Dendritic cell treated with granulocyte-macrophage colony-stimulating factor and Interleukin-4, amounts not matched to agents 40 ng/mL and 50 ng/mL, for 4 days (primary cell): ENCODE measurements at regions of chr1 and their contacts with region 1.

Region 1: GRCh38 chr1:205273551-205273982 is 45.8 kb downstream of the TMCC2 start:
- H3K4me3 Mint-ChIP-seq: no peak overlapping the region
- H3K27ac Mint-ChIP-seq: no peak overlapping the region
- H3K4me1 Mint-ChIP-seq: peaks cover 10% of the 10 kb centered on the region
- H3K27me3 Mint-ChIP-seq: peaks cover 8% of the 10 kb centered on the region

Region 2: DNA sequence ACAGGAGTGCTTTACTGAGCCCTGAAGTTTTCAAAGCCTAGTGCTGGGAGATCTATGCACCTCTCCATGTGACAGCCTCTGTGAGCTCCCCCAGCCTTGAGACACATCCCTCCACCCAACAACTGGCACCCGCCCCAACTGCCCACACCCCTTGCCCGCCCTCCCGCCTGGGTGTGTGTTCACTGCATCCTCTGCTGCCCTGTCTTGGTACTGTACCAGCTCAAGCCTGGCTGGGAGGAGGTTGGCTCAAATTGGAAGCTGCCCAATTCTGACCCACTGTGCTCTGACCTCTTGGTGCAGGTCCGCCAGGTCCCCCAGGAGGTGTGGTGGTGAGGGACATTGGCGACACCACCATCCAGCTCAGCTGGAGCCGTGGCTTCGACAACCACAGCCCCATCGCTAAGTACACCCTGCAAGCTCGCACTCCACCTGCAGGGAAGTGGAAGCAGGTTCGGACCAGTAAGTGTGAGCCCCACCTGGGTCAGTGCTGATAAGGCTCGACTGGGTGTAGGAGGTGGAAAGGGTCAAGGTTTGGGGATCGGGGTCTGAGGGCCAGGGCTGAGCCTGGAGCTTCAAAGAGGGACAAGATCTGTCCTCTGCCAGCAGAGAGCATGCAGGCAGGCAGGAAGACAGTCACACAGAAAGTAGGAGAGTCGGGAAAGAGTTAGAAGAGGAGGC is 207.3 kb before region 1 on chr1:
- intact Hi-C with region 1: no loop called
- H3K4me3 Mint-ChIP-seq: no peak overlapping the region
- H3K27ac Mint-ChIP-seq: no peak overlapping the region
- H3K4me1 Mint-ChIP-seq: no peaks in the 10 kb centered on the region
- H3K27me3 Mint-ChIP-seq: no peaks in the 10 kb centered on the region

Region 3: DNA sequence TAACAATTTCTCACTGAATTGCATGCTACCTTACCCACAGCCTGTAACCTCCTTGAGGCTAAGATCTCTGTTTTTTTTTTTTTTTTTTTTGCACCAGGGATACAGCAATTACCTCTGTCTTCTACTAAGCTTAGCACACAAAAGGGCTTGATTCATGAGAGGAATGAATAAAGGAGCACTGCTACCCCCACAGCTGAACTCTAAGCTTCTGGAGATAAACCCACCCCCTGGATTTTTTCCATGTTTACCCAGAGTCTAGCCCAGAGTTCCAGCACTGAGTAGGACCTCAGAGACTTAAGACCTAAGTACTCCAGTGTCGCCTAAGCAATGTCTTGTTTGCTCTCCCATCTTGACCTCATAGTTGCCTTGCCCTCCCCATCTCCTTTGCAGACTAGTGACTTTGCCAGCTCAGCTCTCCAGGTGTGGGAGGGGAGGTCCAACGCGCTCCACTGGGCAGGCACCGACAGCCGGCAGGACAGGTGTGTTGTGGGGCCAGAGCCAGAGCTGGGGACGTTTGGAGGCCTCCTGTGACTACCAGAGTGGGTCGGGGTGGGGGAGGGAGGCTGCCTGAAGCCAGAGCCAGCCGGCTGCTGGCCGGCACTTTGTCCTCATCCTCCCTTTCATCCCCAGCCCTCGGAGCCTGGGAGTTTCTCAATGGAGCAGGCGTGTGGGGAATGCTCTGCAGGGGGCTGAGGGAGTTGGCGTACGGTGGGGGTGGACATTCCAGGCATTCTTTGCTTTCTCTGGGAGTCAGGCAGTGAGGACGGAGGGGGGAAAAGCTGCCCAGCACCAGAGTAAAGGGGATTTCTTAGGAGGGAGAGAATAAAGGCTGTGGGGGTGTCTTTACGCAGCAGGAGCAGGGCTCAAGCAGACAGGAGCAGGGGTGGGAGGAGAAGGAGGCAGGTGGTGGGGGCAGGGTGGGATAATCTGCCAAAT is 27.6 kb after region 1 on chr1:
- intact Hi-C with region 1: loop called (anchors 2 kb)
- H3K4me3 Mint-ChIP-seq: no peak overlapping the region
- H3K27ac Mint-ChIP-seq: no peak overlapping the region
- H3K4me1 Mint-ChIP-seq: peaks cover 24% of the 10 kb centered on the region
- H3K27me3 Mint-ChIP-seq: peaks cover 4% of the 10 kb centered on the region

Region 4: GRCh38 chr1:205321164-205321958 is 47.8 kb after region 1 on chr1 and contains the start of gene NUAK2:
- intact Hi-C with region 1: loop called (anchors 1 kb)
- H3K4me3 Mint-ChIP-seq: peak within 1 kb of the TSS; percentile 90
- H3K27ac Mint-ChIP-seq: peak within 1 kb of the TSS; percentile 91
- H3K4me1 Mint-ChIP-seq: peaks cover 62% of the 10 kb centered on the region
- H3K27me3 Mint-ChIP-seq: peaks cover 8% of the 10 kb centered on the region

Region 5: DNA sequence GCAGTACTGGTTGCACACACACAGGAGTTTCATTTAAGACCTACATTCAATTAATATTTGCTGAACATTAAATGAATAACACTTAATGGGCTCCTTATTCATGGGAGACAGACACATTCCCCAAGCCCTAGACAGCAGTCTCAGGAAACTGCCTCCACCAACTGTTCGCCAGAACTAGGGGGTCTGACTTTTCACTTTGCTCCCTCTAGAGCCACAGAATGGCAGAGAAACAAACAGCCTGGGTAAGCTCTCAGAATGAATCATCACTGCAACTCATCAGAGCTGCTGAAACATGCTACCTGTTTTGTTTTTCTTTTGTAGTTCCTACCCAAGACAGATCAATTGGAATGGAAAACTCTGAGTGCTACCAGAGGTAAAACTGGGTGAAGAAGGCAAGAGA is 326.5 kb after region 1 on chr1:
- intact Hi-C with region 1: no loop called
- H3K4me3 Mint-ChIP-seq: no peak overlapping the region
- H3K27ac Mint-ChIP-seq: no peak overlapping the region
- H3K4me1 Mint-ChIP-seq: peaks cover 13% of the 10 kb centered on the region
- H3K27me3 Mint-ChIP-seq: no peaks in the 10 kb centered on the region